Right ventricle myocardium inferior (tissue), 1 donor: ENCODE measurements at regions of chr13 and their contacts with region 1.

Region 1: GRCh38 chr13:28953714-28954418 is 133.7 kb downstream of the MTUS2 start:
- DNase-seq: no peak
- ATAC-seq: no peak

Region 2: GRCh38 chr13:28867564-28867963 is 86.3 kb before region 1 on chr13:
- intact Hi-C with region 1: loop called (anchors 10 kb)
- DNase-seq: no peak
- ATAC-seq: peak; percentile 71

Region 3: DNA sequence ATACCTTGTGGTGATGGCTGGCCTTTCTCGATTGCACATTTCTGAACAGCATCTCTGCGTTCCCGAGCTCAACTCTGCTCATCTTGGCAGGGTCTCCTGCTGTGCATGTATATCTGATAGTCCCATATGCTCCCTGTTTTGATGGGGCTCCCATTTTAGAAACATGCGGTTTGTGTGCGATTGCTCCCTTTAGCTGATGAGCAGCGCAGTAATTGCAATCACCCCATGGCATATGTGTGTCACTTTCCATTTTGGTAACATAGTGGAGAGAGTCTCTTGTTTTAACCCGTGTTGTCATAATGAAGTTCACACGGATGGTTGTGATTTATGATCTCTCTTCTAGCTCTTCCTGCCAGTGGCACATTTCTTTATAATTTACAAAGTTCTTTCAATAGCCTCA is 10.9 kb after region 1 on chr13:
- intact Hi-C with region 1: loop called (anchors 1 kb)
- DNase-seq: no peak
- ATAC-seq: no peak

Region 4: GRCh38 chr13:29140277-29140676 is 186.4 kb after region 1 on chr13:
- intact Hi-C with region 1: loop called (anchors 5 kb)
- DNase-seq: no peak
- ATAC-seq: peak; percentile 90

Region 5: GRCh38 chr13:29165840-29166239 is 212.0 kb after region 1 on chr13:
- intact Hi-C with region 1: no loop called
- DNase-seq: no peak
- ATAC-seq: no peak